ENCODE measurements at regions of chr11 and their contacts with region 1.

Region 1: GRCh38 chr11:69000831-69001242 is 12.2 kb downstream of the MRGPRF start:
- DNase-seq: peak; percentile 57
- H3K4me3 ChIP-seq: no peak overlapping the region
- H3K27me3 ChIP-seq: no peaks in the 10 kb centered on the region
- CTCF ChIP-seq: peak; percentile 71

Region 2: GRCh38 chr11:68916439-68916838 is 84.4 kb before region 1 on chr11:
- CTCF ChIA-PET with region 1: no interaction called
- POLR2A ChIA-PET with region 1: no interaction called
- DNase-seq: no peak
- H3K4me3 ChIP-seq: no peak overlapping the region
- H3K27me3 ChIP-seq: no peaks in the 10 kb centered on the region
- CTCF ChIP-seq: no peak

Region 3: GRCh38 chr11:69010964-69011623 is 10.3 kb after region 1 on chr11:
- CTCF ChIA-PET with region 1: interaction called, 31 read pairs
- POLR2A ChIA-PET with region 1: no interaction called
- DNase-seq: no peak
- H3K4me3 ChIP-seq: peak overlapping the region; percentile 51
- H3K27me3 ChIP-seq: no peaks in the 10 kb centered on the region
- CTCF ChIP-seq: no peak

Region 4: DNA sequence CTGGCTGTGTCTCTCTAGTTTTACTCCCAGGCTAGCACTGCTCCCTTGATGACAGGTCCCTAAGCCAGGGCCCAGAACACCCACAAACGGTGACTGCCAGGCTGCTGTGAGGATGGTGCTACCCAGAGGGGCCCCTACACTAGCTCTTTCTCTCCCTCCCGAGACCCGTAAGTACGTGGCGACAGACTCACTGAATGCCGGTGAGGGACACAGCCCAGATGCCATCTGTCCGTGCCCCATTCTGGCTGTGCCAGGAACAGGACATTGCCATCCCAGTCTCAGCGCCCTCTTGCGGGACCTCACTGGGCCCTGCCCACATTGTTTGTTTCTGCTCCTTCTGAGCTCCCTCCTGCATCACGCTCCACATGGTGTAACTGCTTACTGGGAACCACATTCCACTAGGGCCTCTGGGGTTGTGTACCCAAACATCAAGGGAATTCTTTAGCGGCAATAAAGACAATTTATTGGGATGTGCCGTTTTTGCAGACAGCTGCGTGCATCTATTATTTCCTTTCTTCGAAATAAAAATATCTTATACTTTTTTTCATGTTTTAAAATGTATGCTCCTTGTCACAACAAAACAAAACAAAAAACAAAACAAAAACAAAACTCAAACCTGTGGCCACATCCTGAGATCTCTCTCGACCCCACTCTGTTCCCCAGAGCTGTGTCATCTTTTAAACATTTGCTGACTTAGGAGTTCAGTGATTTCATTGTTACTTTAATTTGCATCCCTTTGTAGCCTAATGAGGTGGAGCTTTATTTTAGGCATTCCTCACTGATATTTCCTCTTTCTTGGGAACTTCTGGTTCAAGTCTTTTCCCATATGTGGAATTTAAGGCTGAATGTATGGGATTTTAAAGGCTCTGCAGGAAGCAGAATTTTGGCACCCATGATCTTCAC is 43.5 kb after region 1 on chr11:
- CTCF ChIA-PET with region 1: interaction called, 10 read pairs
- POLR2A ChIA-PET with region 1: no interaction called
- DNase-seq: peak; percentile 66
- H3K4me3 ChIP-seq: no peak overlapping the region
- H3K27me3 ChIP-seq: no peaks in the 10 kb centered on the region
- CTCF ChIP-seq: peak; percentile 87

Measured in BJ (cell line).